Right ventricle myocardium inferior (tissue), 1 donor: ENCODE measurements at regions of chr1 and their contacts with region 1.

Region 1: DNA sequence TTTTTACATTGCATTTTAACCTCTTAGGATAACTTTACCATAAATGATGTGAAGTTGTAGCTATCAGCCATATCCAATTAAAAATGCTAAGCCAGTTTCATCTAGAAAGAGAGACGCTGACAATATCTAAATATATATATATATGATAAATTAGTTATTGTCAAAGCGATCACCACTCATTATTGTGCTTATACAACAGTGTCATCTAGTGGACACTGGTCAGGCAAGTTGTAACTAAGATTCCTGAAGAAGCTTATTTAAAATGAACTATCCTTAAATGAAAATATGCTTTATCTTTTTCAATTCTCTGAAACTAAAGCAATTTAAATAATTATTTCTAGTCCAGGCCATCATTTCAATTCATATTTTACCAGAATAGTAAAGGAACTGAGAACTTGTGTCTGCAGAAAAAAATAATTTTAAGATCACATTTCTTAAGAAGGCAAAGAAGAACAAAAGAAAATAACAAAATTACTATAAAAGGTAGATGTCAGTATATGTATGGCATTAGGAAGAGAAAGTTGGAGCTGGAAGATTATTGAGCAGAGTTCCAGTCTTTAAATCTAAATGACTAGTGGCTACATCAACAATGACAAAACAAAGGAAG is 193.3 kb upstream of the SNX7 start:
- DNase-seq: no peak
- ATAC-seq: no peak

Region 2: GRCh38 chr1:96966536-96967138 is 1501.6 kb before region 1 on chr1:
- intact Hi-C with region 1: loop called (anchors 10 kb)
- DNase-seq: peak; percentile 70
- ATAC-seq: peak; percentile 72

Region 3: GRCh38 chr1:98813738-98814309 is 345.6 kb after region 1 on chr1:
- intact Hi-C with region 1: no loop called
- DNase-seq: no peak
- ATAC-seq: no peak